Dorsolateral prefrontal cortex (tissue), 120 donors: ENCODE measurements at regions of chr10 and their contacts with region 1.

Region 1: DNA sequence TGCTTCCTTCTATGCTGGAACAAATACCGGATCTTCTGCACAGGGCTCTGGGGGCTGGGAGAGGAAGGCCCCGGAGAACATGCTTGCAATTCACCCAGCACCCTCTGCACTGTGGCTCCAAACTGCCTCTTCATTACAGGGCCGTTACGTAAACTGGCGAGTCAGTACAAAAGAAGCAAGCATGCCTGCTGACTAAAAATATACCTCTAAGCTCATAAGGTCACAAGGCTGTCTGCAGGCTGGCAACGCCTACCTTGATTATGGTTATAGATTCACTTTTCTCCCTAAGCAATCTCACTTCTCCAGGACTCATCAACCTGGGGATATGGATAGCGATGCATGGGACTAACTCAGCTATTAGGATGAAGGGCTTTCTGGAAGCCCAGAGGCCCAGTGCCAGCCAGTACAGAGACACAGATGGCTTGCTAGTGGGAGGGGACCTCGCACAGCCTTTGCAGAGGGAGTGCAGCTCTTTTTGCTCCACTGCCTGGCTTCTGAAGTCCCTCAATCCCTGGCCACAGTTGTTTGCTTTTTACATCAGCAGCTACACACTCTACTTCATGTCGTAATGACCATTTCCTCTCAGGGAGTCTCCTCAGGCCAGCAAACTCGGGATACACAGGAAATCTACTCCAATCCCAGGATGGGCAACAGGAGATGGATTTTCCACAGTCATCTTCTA is 96.1 kb downstream of the SH3PXD2A start:
- DNase-seq: peak; percentile 41 to 93 (median 70)
- H3K4me3 ChIP-seq: peak overlapping the region in 9 of 59 donors; percentile 3 to 21 (median 13)
- H3K27ac ChIP-seq: peak overlapping the region; percentile 44 to 96 (median 82)
- H3K27me3 ChIP-seq: no peaks in the 10 kb centered on the region
- CTCF ChIP-seq: no peak

Region 2: GRCh38 chr10:103637927-103638557 is 121.2 kb before region 1 on chr10:
- intact Hi-C with region 1: no loop called
- DNase-seq: peak in 7 of 10 donors; percentile 60 to 87 (median 69)
- H3K4me3 ChIP-seq: peak overlapping the region in 3 of 59 donors; percentile 9 to 14 (median 13)
- H3K27ac ChIP-seq: peak overlapping the region in 58 of 59 donors; percentile 5 to 91 (median 78)
- H3K27me3 ChIP-seq: no peaks in the 10 kb centered on the region
- CTCF ChIP-seq: no peak

Region 3: DNA sequence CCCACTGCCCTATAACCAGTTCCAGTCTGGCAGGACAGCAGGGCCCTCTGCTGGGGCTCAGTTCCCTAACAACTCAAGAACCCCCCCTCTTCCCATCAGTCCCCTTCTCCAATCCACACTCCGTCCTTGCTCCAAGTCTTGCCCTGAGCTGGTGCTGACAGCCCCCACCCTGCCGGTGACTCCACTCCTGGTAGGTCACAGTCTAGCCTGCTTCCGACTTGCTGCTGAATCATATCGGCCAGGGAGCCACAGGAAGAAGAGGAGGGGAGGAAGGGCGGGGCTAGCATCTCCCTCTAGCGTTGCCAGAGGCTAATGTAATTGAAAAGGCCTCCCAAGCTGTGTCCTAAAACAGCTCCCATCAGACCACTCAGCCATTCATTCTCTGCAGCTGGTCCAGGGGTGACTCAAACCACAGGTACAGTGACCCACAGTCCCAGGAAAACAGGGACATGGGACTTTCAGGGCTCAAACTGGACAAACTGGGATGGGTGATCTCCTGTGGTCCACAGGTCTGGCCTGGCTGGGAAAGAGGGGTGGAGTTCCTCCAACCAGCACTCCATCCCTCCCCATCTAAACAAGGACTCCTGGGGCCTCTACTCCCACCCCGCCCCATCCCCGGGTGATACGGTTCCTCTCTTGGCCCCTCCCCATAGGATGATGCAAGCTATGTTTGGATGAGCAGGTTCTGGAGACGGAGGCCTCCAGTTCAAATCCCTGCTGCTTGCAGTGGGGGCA is 62.7 kb before region 1 on chr10:
- intact Hi-C with region 1: no loop called
- DNase-seq: peak in 5 of 10 donors; percentile 58 to 76 (median 63)
- H3K4me3 ChIP-seq: peak overlapping the region in 8 of 59 donors; percentile 2 to 25 (median 11)
- H3K27ac ChIP-seq: peak overlapping the region; percentile 1 to 98 (median 91)
- H3K27me3 ChIP-seq: no peaks in the 10 kb centered on the region
- CTCF ChIP-seq: peak in 47 of 56 donors; percentile 21 to 73 (median 47)

Region 4: DNA sequence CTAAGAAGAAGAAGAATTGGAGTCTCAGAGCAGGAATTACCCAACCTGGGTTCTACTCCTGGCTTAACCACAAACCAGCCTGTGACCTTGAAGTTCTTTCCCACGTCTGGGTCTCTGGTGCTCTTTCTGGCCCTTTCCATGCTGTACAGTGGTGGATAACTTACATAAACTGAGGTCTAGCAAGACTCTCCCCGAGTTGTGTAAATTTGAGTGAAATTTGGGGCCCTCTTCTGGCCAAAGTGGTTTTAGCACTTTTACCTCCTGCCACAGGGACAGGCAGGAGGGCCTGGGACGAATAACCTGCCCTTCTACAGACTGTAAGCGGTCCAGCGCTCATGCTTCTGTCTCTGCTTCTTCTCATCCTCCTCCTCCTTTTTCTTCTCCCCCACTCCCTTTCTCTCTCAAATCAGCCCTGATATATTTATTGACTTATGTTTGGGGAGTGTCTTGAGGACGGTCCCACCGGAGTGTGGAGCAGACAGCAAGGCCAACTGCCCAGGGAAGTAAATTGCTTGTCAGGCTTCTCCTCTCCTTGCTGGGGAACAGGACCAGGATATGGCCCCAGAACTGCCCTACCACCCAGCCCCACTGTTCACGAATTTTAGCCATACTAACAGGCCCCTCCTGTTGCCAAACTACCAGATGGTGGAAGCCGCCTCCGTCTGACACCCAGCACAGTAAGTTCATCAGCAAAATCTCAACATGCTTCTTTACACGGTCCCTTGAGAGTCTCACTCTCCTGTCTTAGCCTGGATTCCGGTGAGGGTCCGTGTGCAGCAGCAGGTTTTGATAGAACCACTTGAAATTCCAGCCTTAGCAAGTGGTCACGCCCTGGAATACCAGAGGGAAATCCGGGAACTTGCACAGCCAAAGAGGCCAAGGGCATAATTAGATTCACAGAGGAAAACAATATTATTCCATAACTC is 100.2 kb after region 1 on chr10:
- intact Hi-C with region 1: loop called in 1 of 2 experiments (anchors 5 kb)
- DNase-seq: peak in 5 of 10 donors; percentile 43 to 76 (median 71)
- H3K4me3 ChIP-seq: no peak overlapping the region
- H3K27ac ChIP-seq: peak overlapping the region in 28 of 59 donors; percentile 2 to 86 (median 50)
- H3K27me3 ChIP-seq: no peaks in the 10 kb centered on the region
- CTCF ChIP-seq: peak; percentile 53 to 94 (median 82)